Activated naive CD4-positive, alpha-beta T cell treated with anti-CD3 and anti-CD28 coated beads for 36 hours (primary cell): ENCODE measurements at regions of chr11 and their contacts with region 1.

Region 1: GRCh38 chr11:107898270-107898669 is 30.0 kb upstream of the RAB39A start:
- DNase-seq: no peak
- H3K4me3 Mint-ChIP-seq: no peak overlapping the region
- H3K27ac Mint-ChIP-seq: no peak overlapping the region
- H3K4me1 Mint-ChIP-seq: no peaks in the 10 kb centered on the region
- H3K27me3 Mint-ChIP-seq: no peaks in the 10 kb centered on the region

Region 2: DNA sequence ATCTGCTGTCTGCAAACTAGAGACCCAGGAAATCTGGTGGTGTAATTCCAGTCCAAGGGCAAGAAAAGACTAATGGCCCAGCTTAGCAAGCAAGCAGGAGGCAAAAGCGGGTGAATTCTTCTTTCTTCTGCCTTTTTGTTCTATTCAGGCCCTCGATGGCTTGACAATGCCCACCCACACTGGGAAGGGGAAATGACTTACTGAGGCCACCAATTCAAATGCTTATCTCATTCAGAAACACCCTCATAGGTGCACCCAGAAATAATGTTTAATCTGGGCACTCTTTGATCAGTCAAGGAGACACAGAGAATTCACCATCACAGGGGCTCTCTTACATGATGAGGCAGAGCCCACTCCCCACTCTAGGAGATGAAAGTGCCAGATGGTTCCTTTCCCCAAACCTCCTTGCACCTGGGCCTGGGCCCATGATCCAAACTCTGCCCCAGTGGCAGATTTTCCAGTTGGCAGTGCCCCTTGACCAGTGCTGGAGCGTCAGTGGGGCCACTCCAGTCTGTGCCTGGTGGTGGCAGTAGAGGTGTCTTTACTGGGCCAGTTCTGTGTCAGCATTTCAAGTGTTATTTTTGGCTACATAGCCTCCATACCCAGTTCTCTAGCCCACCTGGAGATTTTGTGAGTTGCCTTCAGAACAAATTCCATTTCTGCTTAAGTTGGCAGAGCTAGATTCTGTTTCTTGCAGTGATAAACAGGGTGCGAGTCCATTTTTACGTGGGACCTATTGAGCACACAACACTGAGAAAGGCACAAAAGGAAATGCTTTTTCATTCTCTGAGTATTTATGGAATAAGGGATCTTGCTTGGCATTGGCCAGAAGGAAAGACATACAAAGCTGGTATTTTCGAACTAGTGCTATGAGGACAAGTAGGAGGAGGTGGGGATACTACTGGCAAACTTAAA is 299.8 kb before region 1 on chr11:
- CTCF ChIA-PET with region 1: no interaction called
- intact Hi-C with region 1: loop called (anchors 1 kb)
- DNase-seq: peak; percentile 18
- H3K4me3 Mint-ChIP-seq: no peak overlapping the region
- H3K27ac Mint-ChIP-seq: no peak overlapping the region
- H3K4me1 Mint-ChIP-seq: no peaks in the 10 kb centered on the region
- H3K27me3 Mint-ChIP-seq: peaks cover 41% of the 10 kb centered on the region

Region 3: DNA sequence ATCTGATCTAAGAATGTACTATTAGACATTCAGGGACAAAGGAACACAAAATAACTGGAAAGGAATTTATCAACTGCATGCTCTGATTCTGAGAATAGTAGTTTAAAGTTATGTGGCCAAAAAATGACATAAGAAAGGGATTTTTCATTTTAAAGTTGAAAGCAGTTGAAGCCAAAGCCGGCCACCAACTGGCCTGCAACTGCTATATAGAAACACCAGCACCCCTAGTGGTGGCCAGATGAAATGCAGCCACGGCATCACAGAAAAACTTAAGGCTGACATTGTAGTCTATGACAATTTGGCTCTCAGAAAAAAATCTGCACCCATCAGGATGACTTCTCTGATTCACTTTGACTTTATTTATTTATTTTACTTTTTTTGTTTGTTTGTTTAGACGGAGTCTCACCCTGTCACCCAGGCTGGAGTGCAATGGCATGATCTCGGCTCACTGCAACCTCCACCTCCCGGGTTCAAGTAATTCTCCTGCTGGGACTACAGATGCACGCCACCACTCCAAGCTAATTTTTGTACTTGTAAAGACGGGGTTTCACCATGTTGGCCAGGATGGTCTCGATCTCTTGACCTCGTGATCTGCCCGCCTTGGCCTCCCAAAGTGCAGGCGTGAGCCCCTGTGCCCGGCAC is 98.9 kb before region 1 on chr11:
- CTCF ChIA-PET with region 1: interaction called, 3 read pairs
- intact Hi-C with region 1: loop called (anchors 5 kb)
- DNase-seq: peak; percentile 80
- H3K4me3 Mint-ChIP-seq: no peak overlapping the region
- H3K27ac Mint-ChIP-seq: no peak overlapping the region
- H3K4me1 Mint-ChIP-seq: no peaks in the 10 kb centered on the region
- H3K27me3 Mint-ChIP-seq: no peaks in the 10 kb centered on the region

Region 4: GRCh38 chr11:107810875-107811274 is 87.4 kb before region 1 on chr11:
- CTCF ChIA-PET with region 1: no interaction called
- intact Hi-C with region 1: no loop called
- DNase-seq: no peak
- H3K4me3 Mint-ChIP-seq: no peak overlapping the region
- H3K27ac Mint-ChIP-seq: no peak overlapping the region
- H3K4me1 Mint-ChIP-seq: no peaks in the 10 kb centered on the region
- H3K27me3 Mint-ChIP-seq: no peaks in the 10 kb centered on the region

Region 5: DNA sequence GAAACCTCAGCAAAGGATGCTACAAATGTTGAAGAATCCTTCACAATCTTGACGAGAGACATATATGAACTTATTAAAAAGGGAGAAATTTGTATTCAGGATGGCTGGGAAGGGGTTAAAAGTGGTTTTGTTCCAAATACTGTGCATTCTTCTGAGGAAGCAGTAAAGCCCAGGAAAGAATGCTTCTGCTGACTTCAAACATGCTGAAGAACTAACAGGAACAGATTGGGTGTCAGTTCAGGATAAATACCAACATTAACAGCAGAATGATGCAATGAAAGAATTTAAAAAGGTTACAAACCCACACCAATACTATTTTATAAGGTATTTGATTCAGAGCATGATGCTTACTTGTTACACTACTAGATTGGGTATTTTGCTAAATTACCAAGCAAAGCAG is 63.9 kb after region 1 on chr11:
- CTCF ChIA-PET with region 1: no interaction called
- intact Hi-C with region 1: no loop called
- DNase-seq: no peak
- H3K4me3 Mint-ChIP-seq: no peak overlapping the region
- H3K27ac Mint-ChIP-seq: no peak overlapping the region
- H3K4me1 Mint-ChIP-seq: no peaks in the 10 kb centered on the region
- H3K27me3 Mint-ChIP-seq: peaks cover 8% of the 10 kb centered on the region